ENCODE measurements at regions of chr1 and their contacts with region 1.

Region 1: DNA sequence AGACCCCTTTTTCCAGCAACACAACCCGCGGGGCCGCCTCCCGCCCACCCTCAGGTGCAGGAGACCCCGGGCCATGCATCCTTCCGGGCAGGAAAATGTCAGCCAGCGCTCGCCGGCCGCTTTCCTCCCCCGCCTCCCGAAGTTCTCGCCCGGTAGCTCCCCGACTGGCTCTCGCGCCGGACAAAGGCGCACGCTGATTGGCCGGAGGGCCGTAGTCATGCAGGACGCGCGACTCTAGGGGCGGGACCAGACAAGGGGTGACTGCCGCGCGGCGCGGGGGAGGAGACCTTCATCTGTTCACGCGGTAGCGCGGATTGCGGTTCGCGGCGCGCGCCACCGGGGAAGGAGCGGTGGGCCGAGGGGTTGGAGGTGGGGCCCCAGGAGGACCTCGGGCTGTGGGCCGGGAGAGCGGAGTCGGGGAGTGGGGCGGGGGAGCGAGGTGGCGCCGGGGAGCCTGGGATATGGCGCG is at the start of gene FLVCR1:
- DNase-seq: peak; percentile 99
- H3K4me3 Mint-ChIP-seq: no peak within 1 kb of the TSS
- H3K27ac Mint-ChIP-seq: peak within 1 kb of the TSS; percentile 82
- H3K4me1 Mint-ChIP-seq: peaks cover 25% of the 10 kb centered on the region
- H3K27me3 Mint-ChIP-seq: no peaks in the 10 kb centered on the region
- CTCF ChIP-seq: no peak
- total RNA-seq, gene FLVCR1: 26.0 and 27.2 TPM in 2 replicates

Region 2: DNA sequence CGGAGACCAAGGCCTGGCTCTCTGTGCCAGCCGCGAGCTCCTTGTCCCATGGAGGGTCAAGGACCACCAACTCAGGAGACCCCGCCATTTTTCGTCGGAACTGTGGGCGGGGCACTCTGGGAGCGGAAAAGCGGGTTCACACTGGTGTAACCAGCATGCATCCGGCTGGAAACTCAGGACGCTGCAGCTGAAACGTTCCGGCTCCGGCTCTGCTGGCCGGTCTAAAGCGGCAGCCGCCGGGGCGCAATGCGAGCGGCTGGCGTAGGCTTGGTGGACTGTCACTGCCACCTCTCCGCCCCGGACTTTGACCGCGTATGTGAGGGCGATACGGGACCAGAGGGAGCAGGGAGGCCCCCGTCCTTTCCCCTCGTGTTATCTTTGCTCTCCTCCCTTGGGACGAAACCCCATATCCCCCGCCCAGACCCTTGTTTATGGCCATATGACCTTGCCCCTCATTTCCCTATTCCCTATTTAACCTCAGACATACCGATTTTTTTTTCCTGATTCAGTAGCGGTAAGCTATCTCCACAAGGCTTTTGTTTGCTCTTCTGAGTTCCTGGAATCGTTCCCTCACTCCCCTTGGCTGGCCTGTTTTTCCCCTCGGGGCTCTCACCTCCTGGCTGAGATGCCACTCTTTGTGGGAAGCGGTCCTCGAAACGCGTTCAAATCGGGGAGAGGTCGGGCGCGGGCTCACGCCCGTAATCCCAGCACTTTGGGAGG is 66.2 kb before region 1 on chr1 and contains the starts of genes NSL1 and TATDN3:
- CTCF ChIA-PET with region 1: interaction called, 5 read pairs
- intact Hi-C with region 1: loop called (anchors 2 kb)
- DNase-seq: peak; percentile 98
- H3K4me3 Mint-ChIP-seq: peak within 1 kb of the TSS; percentile 76
- H3K27ac Mint-ChIP-seq: peak within 1 kb of the TSS; percentile 58
- H3K4me1 Mint-ChIP-seq: peaks cover 32% of the 10 kb centered on the region
- H3K27me3 Mint-ChIP-seq: no peaks in the 10 kb centered on the region
- CTCF ChIP-seq: no peak
- total RNA-seq, gene NSL1: 41.0 and 47.2 TPM in 2 replicates
- total RNA-seq, gene TATDN3: 9.3 and 10.3 TPM in 2 replicates

Region 3: GRCh38 chr1:212828395-212828794 is 29.6 kb before region 1 on chr1:
- CTCF ChIA-PET with region 1: interaction called, 12 read pairs
- intact Hi-C with region 1: no loop called
- DNase-seq: no peak
- H3K4me3 Mint-ChIP-seq: no peak overlapping the region
- H3K27ac Mint-ChIP-seq: no peak overlapping the region
- H3K4me1 Mint-ChIP-seq: peaks cover 7% of the 10 kb centered on the region
- H3K27me3 Mint-ChIP-seq: no peaks in the 10 kb centered on the region
- CTCF ChIP-seq: no peak

Region 4: GRCh38 chr1:212838145-212838544 is 19.9 kb before region 1 on chr1:
- CTCF ChIA-PET with region 1: interaction called, 12 read pairs
- intact Hi-C with region 1: loop called (anchors 2 kb)
- DNase-seq: peak; percentile 40
- H3K4me3 Mint-ChIP-seq: no peak overlapping the region
- H3K27ac Mint-ChIP-seq: peak overlapping the region; percentile 42
- H3K4me1 Mint-ChIP-seq: peaks cover 22% of the 10 kb centered on the region
- H3K27me3 Mint-ChIP-seq: no peaks in the 10 kb centered on the region
- CTCF ChIP-seq: no peak